CD4-positive, alpha-beta T cell (primary cell): ENCODE measurements at regions of chr16 and their contacts with region 1.

Region 1: GRCh38 chr16:24539291-24539849 is at the start of gene RBBP6:
- DNase-seq: peak; percentile 84 to 99 (median 91)
- ATAC-seq: peak; percentile 83
- H3K4me3 ChIP-seq: peak within 1 kb of the TSS; percentile 90
- H3K4me3 Mint-ChIP-seq: peak within 1 kb of the TSS; percentile 100
- H3K27ac ChIP-seq: peak within 1 kb of the TSS; percentile 95 to 97
- H3K27ac Mint-ChIP-seq: peak within 1 kb of the TSS; percentile 100
- H3K4me1 ChIP-seq: peaks cover 16% of the 10 kb centered on the region
- H3K4me1 Mint-ChIP-seq: peaks cover 54% of the 10 kb centered on the region
- H3K27me3 ChIP-seq: no peaks in the 10 kb centered on the region
- H3K27me3 Mint-ChIP-seq: no peaks in the 10 kb centered on the region
- CTCF ChIP-seq: no peak
- total RNA-seq, gene RBBP6: 178 TPM

Region 2: GRCh38 chr16:23835390-23836077 is 703.8 kb before region 1 on chr16 and contains the start of gene PRKCB:
- CTCF ChIA-PET with region 1: no interaction called
- POLR2A ChIA-PET with region 1: no interaction called
- intact Hi-C with region 1: loop called in 1 of 2 experiments (anchors 10 kb)
- DNase-seq: peak; percentile 79 to 95 (median 88)
- ATAC-seq: peak; percentile 86
- H3K4me3 ChIP-seq: peak within 1 kb of the TSS; percentile 82
- H3K4me3 Mint-ChIP-seq: peak within 1 kb of the TSS; percentile 99
- H3K27ac ChIP-seq: peak within 1 kb of the TSS; percentile 18 to 59
- H3K27ac Mint-ChIP-seq: peak within 1 kb of the TSS; percentile 85
- H3K4me1 ChIP-seq: peaks cover 57% of the 10 kb centered on the region
- H3K4me1 Mint-ChIP-seq: peaks cover 66% of the 10 kb centered on the region
- H3K27me3 ChIP-seq: no peaks in the 10 kb centered on the region
- H3K27me3 Mint-ChIP-seq: no peaks in the 10 kb centered on the region
- CTCF ChIP-seq: no peak
- total RNA-seq, gene PRKCB: 64.7 TPM

Region 3: GRCh38 chr16:24550295-24550694 is 10.9 kb after region 1 on chr16:
- CTCF ChIA-PET with region 1: interaction called, 4 read pairs
- POLR2A ChIA-PET with region 1: interaction called, 11 read pairs
- intact Hi-C with region 1: no loop called
- DNase-seq: no peak
- ATAC-seq: no peak
- H3K4me3 ChIP-seq: no peak overlapping the region
- H3K4me3 Mint-ChIP-seq: no peak overlapping the region
- H3K27ac ChIP-seq: no peak overlapping the region
- H3K27ac Mint-ChIP-seq: peak overlapping the region; percentile 45
- H3K4me1 ChIP-seq: no peaks in the 10 kb centered on the region
- H3K4me1 Mint-ChIP-seq: peaks cover 72% of the 10 kb centered on the region
- H3K27me3 ChIP-seq: no peaks in the 10 kb centered on the region
- H3K27me3 Mint-ChIP-seq: no peaks in the 10 kb centered on the region
- CTCF ChIP-seq: no peak

Region 4: DNA sequence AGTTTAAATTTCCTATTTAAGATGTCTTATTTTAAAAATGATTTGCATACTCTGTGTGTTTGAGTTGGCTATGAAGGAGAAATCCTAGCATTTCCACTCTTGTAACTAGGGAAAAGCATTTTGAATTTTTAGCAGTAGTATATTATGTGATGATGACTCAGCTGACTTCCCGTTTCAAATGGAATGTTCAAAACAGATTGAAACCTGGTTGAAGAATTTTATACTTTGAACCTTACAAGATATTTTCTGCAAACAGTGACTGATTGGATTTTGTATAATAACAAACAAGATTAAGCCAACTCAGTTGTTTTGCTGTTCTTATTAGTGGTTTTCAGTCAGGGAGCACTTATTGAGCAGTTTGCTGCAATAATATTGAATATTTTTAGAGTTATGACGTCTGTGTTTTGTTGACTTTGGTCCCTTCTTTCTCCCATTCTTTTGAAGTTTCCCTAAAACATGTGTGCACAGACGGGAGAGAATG is 198.1 kb after region 1 on chr16:
- CTCF ChIA-PET with region 1: no interaction called
- POLR2A ChIA-PET with region 1: no interaction called
- intact Hi-C with region 1: loop called in 1 of 2 experiments (anchors 5 kb)
- DNase-seq: no peak
- ATAC-seq: no peak
- H3K4me3 ChIP-seq: no peak overlapping the region
- H3K4me3 Mint-ChIP-seq: peak overlapping the region; percentile 3
- H3K27ac ChIP-seq: no peak overlapping the region
- H3K27ac Mint-ChIP-seq: no peak overlapping the region
- H3K4me1 ChIP-seq: peaks cover 35% of the 10 kb centered on the region
- H3K4me1 Mint-ChIP-seq: peaks cover 94% of the 10 kb centered on the region
- H3K27me3 ChIP-seq: no peaks in the 10 kb centered on the region
- H3K27me3 Mint-ChIP-seq: no peaks in the 10 kb centered on the region
- CTCF ChIP-seq: no peak

Region 5: DNA sequence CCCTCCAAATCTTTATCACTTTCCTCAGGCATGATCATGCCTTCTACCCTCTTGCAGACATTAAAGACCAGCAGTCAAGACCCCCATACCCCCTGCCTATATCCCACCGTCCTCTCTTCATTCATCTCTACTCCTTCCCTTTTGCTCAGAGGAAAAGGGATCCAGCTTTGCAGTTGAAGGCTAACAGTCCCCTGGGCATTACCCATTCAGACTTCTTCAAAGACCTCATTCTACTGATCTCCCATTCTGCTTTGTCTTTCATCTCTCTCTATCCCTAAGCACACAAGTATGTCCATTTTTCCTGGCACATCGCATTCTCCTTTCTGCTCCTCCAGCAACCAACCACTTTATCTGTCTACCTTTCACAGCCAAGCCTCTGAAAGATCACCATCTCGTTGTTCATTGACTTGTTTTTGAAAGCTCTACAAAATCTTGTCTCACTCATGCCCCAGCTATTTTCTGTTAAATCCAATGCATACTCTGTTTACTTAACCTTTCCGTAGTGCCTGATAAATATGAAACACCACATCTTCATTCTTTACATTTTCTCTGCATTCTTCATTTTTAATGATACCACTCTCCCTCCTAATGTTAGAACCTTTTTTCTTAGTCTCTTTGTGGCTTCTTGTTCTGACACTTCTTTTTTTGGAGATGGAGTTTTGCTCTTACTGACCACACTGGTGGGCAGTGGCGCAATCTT is 558.1 kb after region 1 on chr16:
- CTCF ChIA-PET with region 1: no interaction called
- POLR2A ChIA-PET with region 1: no interaction called
- intact Hi-C with region 1: no loop called
- DNase-seq: no peak
- ATAC-seq: no peak
- H3K4me3 ChIP-seq: no peak overlapping the region
- H3K4me3 Mint-ChIP-seq: no peak overlapping the region
- H3K27ac ChIP-seq: no peak overlapping the region
- H3K27ac Mint-ChIP-seq: no peak overlapping the region
- H3K4me1 ChIP-seq: peaks cover 20% of the 10 kb centered on the region
- H3K4me1 Mint-ChIP-seq: peaks cover 27% of the 10 kb centered on the region
- H3K27me3 ChIP-seq: no peaks in the 10 kb centered on the region
- H3K27me3 Mint-ChIP-seq: no peaks in the 10 kb centered on the region
- CTCF ChIP-seq: no peak

Region 6: GRCh38 chr16:25111403-25112166 is 572.2 kb after region 1 on chr16 and contains the start of gene LCMT1:
- CTCF ChIA-PET with region 1: no interaction called
- POLR2A ChIA-PET with region 1: no interaction called
- intact Hi-C with region 1: loop called in 1 of 2 experiments (anchors 5 kb)
- DNase-seq: peak; percentile 78 to 98 (median 85)
- ATAC-seq: peak; percentile 91
- H3K4me3 ChIP-seq: peak within 1 kb of the TSS; percentile 71
- H3K4me3 Mint-ChIP-seq: peak within 1 kb of the TSS; percentile 97
- H3K27ac ChIP-seq: peak within 1 kb of the TSS; percentile 28 to 32
- H3K27ac Mint-ChIP-seq: peak within 1 kb of the TSS; percentile 72
- H3K4me1 ChIP-seq: peaks cover 33% of the 10 kb centered on the region
- H3K4me1 Mint-ChIP-seq: peaks cover 71% of the 10 kb centered on the region
- H3K27me3 ChIP-seq: no peaks in the 10 kb centered on the region
- H3K27me3 Mint-ChIP-seq: no peaks in the 10 kb centered on the region
- CTCF ChIP-seq: no peak
- total RNA-seq, gene LCMT1: 22.5 to 28.2 TPM